CD4-positive, alpha-beta memory T cell (primary cell): ENCODE measurements at regions of chr5 and their contacts with region 1.

Region 1: DNA sequence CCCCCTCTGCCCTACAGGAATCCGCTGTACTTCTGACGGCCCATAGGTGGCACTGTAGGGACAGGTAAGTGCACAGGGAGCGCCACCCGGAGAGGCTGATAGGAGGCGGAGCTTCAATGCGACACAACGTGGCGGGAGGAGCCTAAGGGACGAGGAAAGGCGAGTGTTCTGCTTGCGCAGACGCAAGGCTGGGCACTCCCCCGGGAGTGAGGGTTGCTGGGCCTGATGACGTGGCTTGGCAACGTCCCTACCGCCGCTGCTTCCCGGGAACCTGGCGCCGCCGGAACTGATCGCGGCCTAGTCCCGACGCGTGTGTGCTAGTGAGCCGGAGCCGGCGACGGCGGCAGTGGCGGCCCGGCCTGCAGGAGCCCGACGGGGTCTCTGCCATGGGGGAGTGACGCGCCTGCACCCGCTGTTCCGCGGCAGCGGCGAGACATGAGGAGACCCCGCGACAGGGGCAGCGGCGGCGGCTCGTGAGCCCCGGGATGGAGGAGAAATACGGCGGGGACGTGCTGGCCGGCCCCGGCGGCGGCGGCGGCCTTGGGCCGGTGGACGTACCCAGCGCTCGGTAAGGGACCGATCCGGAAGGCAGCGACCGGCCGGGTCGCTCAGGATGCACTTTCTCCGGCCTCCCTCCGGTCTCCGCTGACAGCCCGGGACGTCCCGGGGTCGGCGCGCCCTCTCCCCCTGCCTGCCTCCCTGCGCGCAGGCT is at the start of gene SLC30A5:
- DNase-seq: peak; percentile 95 to 100 (median 99)
- H3K4me3 ChIP-seq: peak within 1 kb of the TSS; percentile 19 to 75
- H3K4me3 Mint-ChIP-seq: peak within 1 kb of the TSS; percentile 90 to 98 (median 92)
- H3K27ac ChIP-seq: peak within 1 kb of the TSS; percentile 97
- H3K27ac Mint-ChIP-seq: peak within 1 kb of the TSS; percentile 95 to 98 (median 97)
- H3K4me1 ChIP-seq: peaks cover 39% of the 10 kb centered on the region
- H3K4me1 Mint-ChIP-seq: peaks cover 21 to 50% (median 31%) of the 10 kb centered on the region in 4 donors
- H3K27me3 ChIP-seq: no peaks in the 10 kb centered on the region
- H3K27me3 Mint-ChIP-seq: no peaks in the 10 kb centered on the region
- total RNA-seq, gene SLC30A5: 44.9 to 50.2 TPM

Region 2: DNA sequence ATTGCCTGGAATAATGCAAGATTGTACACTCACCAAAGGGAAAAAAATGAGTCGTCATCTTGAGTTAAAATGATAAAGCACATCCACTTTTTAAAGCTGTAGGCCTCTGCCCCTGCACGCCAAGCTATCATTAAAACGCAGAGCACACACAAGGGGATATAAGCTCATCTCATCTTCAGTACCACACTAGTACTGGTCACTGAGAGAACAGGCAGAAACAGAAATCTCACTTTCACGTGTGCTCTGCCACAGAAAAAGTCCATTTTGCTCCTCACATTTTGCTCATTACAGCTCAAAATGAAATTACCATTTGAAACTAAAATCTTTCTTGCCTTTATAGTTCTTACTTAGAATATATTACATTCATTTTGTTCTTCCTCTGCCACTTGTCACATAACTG is 99.3 kb before region 1 on chr5:
- CTCF ChIA-PET with region 1: no interaction called
- POLR2A ChIA-PET with region 1: no interaction called
- intact Hi-C with region 1: no loop called
- DNase-seq: no peak
- H3K4me3 ChIP-seq: no peak overlapping the region
- H3K4me3 Mint-ChIP-seq: no peak overlapping the region
- H3K27ac ChIP-seq: no peak overlapping the region
- H3K27ac Mint-ChIP-seq: no peak overlapping the region
- H3K4me1 ChIP-seq: no peaks in the 10 kb centered on the region
- H3K4me1 Mint-ChIP-seq: peaks cover 0 to 7% (median 3%) of the 10 kb centered on the region in 4 donors
- H3K27me3 ChIP-seq: no peaks in the 10 kb centered on the region
- H3K27me3 Mint-ChIP-seq: peaks cover 6 to 10% of the 10 kb centered on the region in 2 donors

Region 3: DNA sequence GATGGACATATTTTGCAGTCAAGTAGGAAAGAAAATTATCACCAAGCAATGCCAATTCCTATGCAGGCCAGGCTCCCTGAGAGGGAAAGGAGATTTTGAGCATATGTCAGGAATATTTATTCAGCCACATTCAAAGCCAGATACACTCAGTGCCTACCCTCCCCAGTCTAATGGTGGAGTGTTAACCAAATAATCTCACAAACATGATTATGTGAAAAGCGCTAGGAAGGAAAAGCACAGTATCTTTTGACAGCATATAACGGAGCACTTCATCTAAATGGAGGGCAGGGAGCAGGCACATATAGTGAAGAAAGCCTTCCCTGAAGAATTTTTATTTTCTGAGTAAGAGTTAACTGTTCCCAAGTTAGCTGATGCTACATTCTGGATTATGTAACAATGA is 80.4 kb before region 1 on chr5:
- CTCF ChIA-PET with region 1: no interaction called
- POLR2A ChIA-PET with region 1: no interaction called
- intact Hi-C with region 1: no loop called
- DNase-seq: no peak
- H3K4me3 ChIP-seq: no peak overlapping the region
- H3K4me3 Mint-ChIP-seq: no peak overlapping the region
- H3K27ac ChIP-seq: no peak overlapping the region
- H3K27ac Mint-ChIP-seq: no peak overlapping the region
- H3K4me1 ChIP-seq: no peaks in the 10 kb centered on the region
- H3K4me1 Mint-ChIP-seq: no peaks in the 10 kb centered on the region
- H3K27me3 ChIP-seq: no peaks in the 10 kb centered on the region
- H3K27me3 Mint-ChIP-seq: peaks cover 8 to 18% of the 10 kb centered on the region in 2 donors

Region 4: DNA sequence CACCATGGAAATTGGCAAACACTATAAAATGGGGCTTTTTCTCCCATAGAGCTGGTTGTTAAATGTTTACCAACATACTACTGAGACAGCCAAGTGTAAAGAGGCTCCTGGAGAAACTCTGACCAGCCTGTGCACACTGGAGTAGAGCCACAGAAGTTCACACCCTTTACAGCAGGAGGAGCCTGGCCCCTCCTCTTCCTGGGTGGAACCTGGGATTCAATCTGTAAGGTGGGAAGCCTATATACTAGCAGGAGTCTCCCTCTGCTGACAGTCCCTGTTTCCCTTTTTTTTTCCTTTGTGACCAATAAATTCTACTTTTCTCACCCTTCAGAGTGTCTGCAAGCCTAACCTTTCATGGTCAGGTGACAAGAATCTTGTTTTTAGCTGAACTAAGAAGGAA is 10.5 kb before region 1 on chr5:
- CTCF ChIA-PET with region 1: interaction called, 16 read pairs
- POLR2A ChIA-PET with region 1: interaction called, 4 read pairs
- intact Hi-C with region 1: no loop called
- DNase-seq: no peak
- H3K4me3 ChIP-seq: no peak overlapping the region
- H3K4me3 Mint-ChIP-seq: no peak overlapping the region
- H3K27ac ChIP-seq: no peak overlapping the region
- H3K27ac Mint-ChIP-seq: no peak overlapping the region
- H3K4me1 ChIP-seq: no peaks in the 10 kb centered on the region
- H3K4me1 Mint-ChIP-seq: peaks cover 0 to 8% (median 3%) of the 10 kb centered on the region in 4 donors
- H3K27me3 ChIP-seq: no peaks in the 10 kb centered on the region
- H3K27me3 Mint-ChIP-seq: peaks cover 1% of the 10 kb centered on the region in 2 donors

Region 5: DNA sequence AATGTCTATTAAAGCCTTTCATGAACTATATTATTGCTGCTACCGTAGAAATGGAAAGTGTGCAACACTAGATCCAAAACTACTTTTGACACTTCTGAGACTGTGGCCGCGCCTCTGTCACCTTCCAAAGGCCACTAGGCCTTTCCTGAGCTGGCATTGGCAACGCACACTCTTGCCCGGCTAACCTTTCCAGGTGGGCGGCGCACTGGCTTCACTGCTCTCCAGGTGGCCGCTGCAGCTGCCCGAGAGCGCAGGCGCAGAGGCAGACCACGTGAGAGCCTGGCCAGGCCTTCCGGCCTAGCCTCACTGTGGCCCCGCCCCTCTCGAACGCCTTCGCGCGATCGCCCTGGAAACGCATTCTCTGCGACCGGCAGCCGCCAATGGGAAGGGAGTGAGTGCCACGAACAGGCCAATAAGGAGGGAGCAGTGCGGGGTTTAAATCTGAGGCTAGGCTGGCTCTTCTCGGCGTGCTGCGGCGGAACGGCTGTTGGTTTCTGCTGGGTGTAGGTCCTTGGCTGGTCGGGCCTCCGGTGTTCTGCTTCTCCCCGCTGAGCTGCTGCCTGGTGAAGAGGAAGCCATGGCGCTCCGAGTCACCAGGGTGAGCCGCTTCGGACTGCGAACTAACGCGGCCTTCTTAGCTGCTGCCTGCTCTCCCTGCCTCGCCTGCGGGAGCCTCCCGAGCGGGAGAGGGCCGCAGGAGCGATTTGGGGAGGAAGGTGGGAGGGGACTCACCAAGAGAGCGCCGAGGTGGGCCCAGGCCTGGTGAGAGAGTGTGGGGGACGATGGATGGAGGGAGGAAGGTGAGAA is 73.0 kb after region 1 on chr5 and contains the start of gene CCNB1:
- CTCF ChIA-PET with region 1: interaction called, 8 read pairs
- POLR2A ChIA-PET with region 1: interaction called, 8 read pairs
- intact Hi-C with region 1: loop called (anchors 1 kb)
- DNase-seq: peak; percentile 95 to 97 (median 96)
- H3K4me3 ChIP-seq: peak within 1 kb of the TSS; percentile 47 to 90
- H3K4me3 Mint-ChIP-seq: peak within 1 kb of the TSS; percentile 90 to 96 (median 94)
- H3K27ac ChIP-seq: peak within 1 kb of the TSS; percentile 63
- H3K27ac Mint-ChIP-seq: peak within 1 kb of the TSS; percentile 88 to 97 (median 94)
- H3K4me1 ChIP-seq: peaks cover 20% of the 10 kb centered on the region
- H3K4me1 Mint-ChIP-seq: peaks cover 11 to 29% (median 20%) of the 10 kb centered on the region in 4 donors
- H3K27me3 ChIP-seq: no peaks in the 10 kb centered on the region
- H3K27me3 Mint-ChIP-seq: no peaks in the 10 kb centered on the region
- total RNA-seq, gene CCNB1: 2.9 to 3.4 TPM

Region 6: GRCh38 chr5:69217548-69218526 is 123.9 kb after region 1 on chr5:
- CTCF ChIA-PET with region 1: interaction called, 7 read pairs
- POLR2A ChIA-PET with region 1: no interaction called
- intact Hi-C with region 1: loop called (anchors 1 kb)
- DNase-seq: peak; percentile 89 to 94 (median 90)
- H3K4me3 ChIP-seq: peak overlapping the region; percentile 67 to 92
- H3K4me3 Mint-ChIP-seq: peak overlapping the region; percentile 96 to 100 (median 98)
- H3K27ac ChIP-seq: peak overlapping the region; percentile 87
- H3K27ac Mint-ChIP-seq: peak overlapping the region; percentile 97 to 100 (median 98)
- H3K4me1 ChIP-seq: peaks cover 22% of the 10 kb centered on the region
- H3K4me1 Mint-ChIP-seq: peaks cover 19 to 27% (median 25%) of the 10 kb centered on the region in 4 donors
- H3K27me3 ChIP-seq: no peaks in the 10 kb centered on the region
- H3K27me3 Mint-ChIP-seq: no peaks in the 10 kb centered on the region

Region 7: DNA sequence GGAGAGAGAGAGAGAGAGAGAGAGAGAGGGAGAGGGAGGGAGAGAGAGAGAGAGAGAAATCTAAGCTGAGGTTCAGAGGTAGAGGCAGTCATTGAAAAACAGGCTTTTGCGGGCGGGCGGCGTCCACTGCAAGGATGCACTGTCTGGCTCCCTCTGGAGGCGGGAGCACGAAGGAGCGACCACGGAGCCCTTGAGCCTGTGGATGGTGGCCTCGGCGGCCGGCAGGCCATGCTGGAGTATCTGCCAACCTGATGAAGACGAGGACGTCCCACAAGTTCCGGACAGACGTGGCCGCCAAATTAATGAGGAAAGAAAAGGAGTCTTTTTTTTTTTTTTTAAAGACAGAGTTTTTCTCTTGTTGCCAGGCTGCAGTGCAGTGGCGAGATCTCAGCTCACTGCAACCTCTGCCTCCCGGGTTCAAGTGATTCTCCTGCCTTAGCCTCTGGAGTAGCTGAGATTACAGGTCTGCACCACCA is 240.9 kb after region 1 on chr5:
- CTCF ChIA-PET with region 1: interaction called, 80 read pairs
- POLR2A ChIA-PET with region 1: interaction called, 27 read pairs
- intact Hi-C with region 1: loop called (anchors 1 kb)
- DNase-seq: peak; percentile 61 to 73 (median 70)
- H3K4me3 ChIP-seq: no peak overlapping the region
- H3K4me3 Mint-ChIP-seq: peak overlapping the region; percentile 42 to 66 (median 53)
- H3K27ac ChIP-seq: no peak overlapping the region
- H3K27ac Mint-ChIP-seq: peak overlapping the region; percentile 53 to 91 (median 72)
- H3K4me1 ChIP-seq: peaks cover 19% of the 10 kb centered on the region
- H3K4me1 Mint-ChIP-seq: peaks cover 11 to 33% (median 16%) of the 10 kb centered on the region in 4 donors
- H3K27me3 ChIP-seq: no peaks in the 10 kb centered on the region
- H3K27me3 Mint-ChIP-seq: no peaks in the 10 kb centered on the region

Region 8: GRCh38 chr5:69414885-69415583 is 321.1 kb after region 1 on chr5 and contains the start of gene MARVELD2:
- CTCF ChIA-PET with region 1: no interaction called
- POLR2A ChIA-PET with region 1: no interaction called
- intact Hi-C with region 1: loop called (anchors 5 kb)
- DNase-seq: peak; percentile 17 to 58 (median 29)
- H3K4me3 ChIP-seq: peak within 1 kb of the TSS; percentile 47 to 53
- H3K4me3 Mint-ChIP-seq: peak within 1 kb of the TSS; percentile 74 to 84 (median 78)
- H3K27ac ChIP-seq: peak within 1 kb of the TSS; percentile 43
- H3K27ac Mint-ChIP-seq: peak within 1 kb of the TSS; percentile 42 to 83 (median 74)
- H3K4me1 ChIP-seq: peaks cover 4% of the 10 kb centered on the region
- H3K4me1 Mint-ChIP-seq: peaks cover 2 to 18% (median 12%) of the 10 kb centered on the region in 4 donors
- H3K27me3 ChIP-seq: no peaks in the 10 kb centered on the region
- H3K27me3 Mint-ChIP-seq: no peaks in the 10 kb centered on the region
- total RNA-seq, gene MARVELD2: 1.1 TPM